GM10248 (cell line): ENCODE measurements at regions of chr2 and their contacts with region 1.

Region 1: GRCh38 chr2:19347619-19348562 is 10.5 kb downstream of the OSR1 start:
- DNase-seq: peak; percentile 97
- CTCF ChIP-seq: no peak

Region 2: GRCh38 chr2:19336781-19337180 is 11.1 kb before region 1 on chr2:
- CTCF ChIA-PET with region 1: interaction called, 17 read pairs
- POLR2A ChIA-PET with region 1: no interaction called
- DNase-seq: no peak
- CTCF ChIP-seq: no peak

Region 3: GRCh38 chr2:19358242-19359020 is 10.5 kb after region 1 on chr2 and contains the start of gene OSR1:
- CTCF ChIA-PET with region 1: interaction called, 14 read pairs
- POLR2A ChIA-PET with region 1: no interaction called
- DNase-seq: peak; percentile 26
- CTCF ChIP-seq: no peak

Region 4: GRCh38 chr2:19416784-19417684 is 69.1 kb after region 1 on chr2:
- CTCF ChIA-PET with region 1: no interaction called
- POLR2A ChIA-PET with region 1: no interaction called
- DNase-seq: no peak
- CTCF ChIP-seq: no peak

Region 5: GRCh38 chr2:20115901-20116300 is 768.0 kb after region 1 on chr2:
- CTCF ChIA-PET with region 1: no interaction called
- POLR2A ChIA-PET with region 1: interaction called, 10 read pairs
- DNase-seq: no peak
- CTCF ChIP-seq: no peak